Caco-2 (cell line): ENCODE measurements at regions of chr5 and their contacts with region 1.

Region 1: DNA sequence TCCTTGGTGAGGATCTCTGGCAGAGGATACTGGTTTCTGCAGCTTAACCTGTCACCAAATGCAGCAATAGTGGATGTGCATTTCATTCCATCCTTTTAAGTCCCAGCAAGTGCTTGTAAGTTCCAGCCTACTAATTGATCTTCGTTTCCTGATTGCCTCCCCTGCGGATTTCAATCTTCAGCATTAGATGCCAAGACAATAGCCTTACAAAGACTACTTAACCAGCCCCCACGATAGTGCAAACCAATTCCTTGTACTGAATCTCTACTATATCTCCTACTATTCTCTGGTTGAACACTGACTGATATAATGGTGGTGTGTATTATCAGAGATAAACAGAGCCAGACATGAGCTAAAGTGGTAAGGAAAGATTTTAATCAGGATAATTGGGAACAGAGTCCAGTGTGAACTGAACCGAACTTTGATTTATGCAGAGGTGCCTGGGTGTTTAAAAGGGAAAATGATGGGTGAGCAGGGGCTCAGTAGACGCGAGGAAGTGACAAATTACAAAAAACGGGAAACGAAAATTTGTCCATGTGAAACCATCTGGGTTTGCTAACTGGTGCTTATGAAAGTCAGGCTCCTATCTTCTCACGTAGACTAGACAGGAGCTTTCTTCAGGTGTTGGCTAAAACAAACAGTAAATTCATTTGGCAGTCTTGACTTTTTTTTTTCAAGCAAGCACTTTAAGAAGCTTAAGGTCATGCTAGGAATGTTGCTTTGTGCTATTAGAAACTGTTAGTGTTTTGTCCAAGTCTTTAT is 106.9 kb upstream of the ST8SIA4 start:
- DNase-seq: no peak
- H3K4me3 ChIP-seq: no peak overlapping the region
- H3K4me3 Mint-ChIP-seq: no peak overlapping the region
- H3K27ac Mint-ChIP-seq: no peak overlapping the region
- H3K4me1 ChIP-seq: peaks cover 8% of the 10 kb centered on the region; the same call in 1 of the 2 replicates
- H3K4me1 Mint-ChIP-seq: peaks cover 7% of the 10 kb centered on the region
- H3K27me3 ChIP-seq: no peaks in the 10 kb centered on the region
- H3K27me3 Mint-ChIP-seq: no peaks in the 10 kb centered on the region
- CTCF ChIP-seq: no peak

Region 2: DNA sequence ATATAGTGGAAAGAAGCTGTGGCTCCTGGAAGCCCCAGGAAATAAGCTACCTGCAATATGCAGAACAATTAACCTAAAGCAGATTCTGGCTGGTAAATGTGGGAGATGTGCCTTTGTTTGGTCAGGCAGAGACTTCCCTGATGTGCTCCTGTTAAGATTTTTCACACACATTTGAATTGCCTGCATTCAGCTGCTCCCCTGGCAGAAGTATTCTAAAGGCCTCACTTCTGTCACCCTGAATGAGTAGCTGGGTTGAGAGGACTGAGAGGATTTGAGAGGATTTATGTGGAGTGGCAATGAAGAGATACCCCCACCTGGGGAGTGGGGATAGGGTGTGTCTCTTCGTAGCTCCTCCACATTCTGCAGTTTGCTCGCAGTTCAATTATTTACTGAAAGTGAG is 237.4 kb before region 1 on chr5:
- CTCF ChIA-PET with region 1: no interaction called
- POLR2A ChIA-PET with region 1: no interaction called
- intact Hi-C with region 1: loop called (anchors 5 kb)
- DNase-seq: no peak
- H3K4me3 ChIP-seq: no peak overlapping the region
- H3K4me3 Mint-ChIP-seq: no peak overlapping the region
- H3K27ac Mint-ChIP-seq: no peak overlapping the region
- H3K4me1 ChIP-seq: no peaks in the 10 kb centered on the region
- H3K4me1 Mint-ChIP-seq: no peaks in the 10 kb centered on the region
- H3K27me3 ChIP-seq: no peaks in the 10 kb centered on the region
- H3K27me3 Mint-ChIP-seq: no peaks in the 10 kb centered on the region
- CTCF ChIP-seq: no peak